ENCODE measurements at regions of chr6 and their contacts with region 1.

Region 1: DNA sequence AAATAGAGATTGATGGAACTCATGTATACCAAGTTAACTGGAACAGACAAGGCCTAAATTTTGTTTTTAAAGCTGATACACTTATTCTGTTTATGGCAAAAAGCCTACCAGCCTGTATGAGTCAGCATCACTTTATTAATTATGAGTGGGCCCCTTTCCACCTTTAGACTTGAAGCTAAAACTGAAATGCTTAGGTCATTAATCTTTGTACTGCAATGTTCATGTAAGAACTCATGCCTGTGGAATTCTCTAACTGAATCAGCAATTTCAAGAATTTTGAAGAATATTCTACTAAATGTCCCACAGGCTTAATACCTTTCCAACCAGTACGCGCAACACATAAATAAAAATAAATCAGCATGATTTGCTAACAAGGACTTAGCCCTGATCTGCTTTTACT is 140.2 kb upstream of the PHACTR1 start:
- DNase-seq: peak; percentile 34
- H3K4me3 Mint-ChIP-seq: no peak overlapping the region
- H3K27ac Mint-ChIP-seq: peak overlapping the region; percentile 16
- H3K4me1 Mint-ChIP-seq: peaks cover 56% of the 10 kb centered on the region
- H3K27me3 Mint-ChIP-seq: no peaks in the 10 kb centered on the region
- CTCF ChIP-seq: no peak

Region 2: GRCh38 chr6:12354499-12354898 is 221.9 kb before region 1 on chr6:
- CTCF ChIA-PET with region 1: no interaction called
- POLR2A ChIA-PET with region 1: interaction called, 21 read pairs
- intact Hi-C with region 1: no loop called
- DNase-seq: peak; percentile 90
- H3K4me3 Mint-ChIP-seq: peak overlapping the region; percentile 49
- H3K27ac Mint-ChIP-seq: peak overlapping the region; percentile 83
- H3K4me1 Mint-ChIP-seq: peaks cover 39% of the 10 kb centered on the region
- H3K27me3 Mint-ChIP-seq: no peaks in the 10 kb centered on the region
- CTCF ChIP-seq: no peak

Region 3: GRCh38 chr6:12472601-12473038 is 103.8 kb before region 1 on chr6:
- CTCF ChIA-PET with region 1: no interaction called
- POLR2A ChIA-PET with region 1: interaction called, 28 read pairs
- intact Hi-C with region 1: no loop called
- DNase-seq: peak; percentile 96
- H3K4me3 Mint-ChIP-seq: no peak overlapping the region
- H3K27ac Mint-ChIP-seq: peak overlapping the region; percentile 49
- H3K4me1 Mint-ChIP-seq: peaks cover 41% of the 10 kb centered on the region
- H3K27me3 Mint-ChIP-seq: no peaks in the 10 kb centered on the region
- CTCF ChIP-seq: no peak

Region 4: DNA sequence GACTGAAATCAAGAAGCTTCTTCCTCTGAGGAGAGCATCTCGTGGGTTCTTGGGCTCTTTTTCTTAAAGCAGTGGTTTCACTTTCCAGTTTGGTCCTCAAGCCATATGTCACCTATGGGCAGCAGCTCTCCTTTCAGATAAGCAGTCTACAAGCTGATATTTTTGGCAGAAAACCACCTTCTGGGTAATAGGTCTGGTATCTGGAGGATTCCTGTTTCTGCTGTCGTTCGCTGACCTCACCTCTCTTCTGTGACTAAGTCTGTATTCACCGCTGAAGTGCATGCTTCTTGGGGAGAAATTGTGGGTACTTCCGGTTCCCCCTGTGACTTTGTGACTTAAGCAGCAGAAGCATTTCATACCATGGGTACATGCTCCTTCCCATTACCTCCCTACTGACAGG is 92.7 kb before region 1 on chr6:
- CTCF ChIA-PET with region 1: no interaction called
- POLR2A ChIA-PET with region 1: interaction called, 19 read pairs
- intact Hi-C with region 1: no loop called
- DNase-seq: peak; percentile 76
- H3K4me3 Mint-ChIP-seq: peak overlapping the region; percentile 35
- H3K27ac Mint-ChIP-seq: peak overlapping the region; percentile 47
- H3K4me1 Mint-ChIP-seq: peaks cover 25% of the 10 kb centered on the region
- H3K27me3 Mint-ChIP-seq: no peaks in the 10 kb centered on the region
- CTCF ChIP-seq: no peak

Region 5: DNA sequence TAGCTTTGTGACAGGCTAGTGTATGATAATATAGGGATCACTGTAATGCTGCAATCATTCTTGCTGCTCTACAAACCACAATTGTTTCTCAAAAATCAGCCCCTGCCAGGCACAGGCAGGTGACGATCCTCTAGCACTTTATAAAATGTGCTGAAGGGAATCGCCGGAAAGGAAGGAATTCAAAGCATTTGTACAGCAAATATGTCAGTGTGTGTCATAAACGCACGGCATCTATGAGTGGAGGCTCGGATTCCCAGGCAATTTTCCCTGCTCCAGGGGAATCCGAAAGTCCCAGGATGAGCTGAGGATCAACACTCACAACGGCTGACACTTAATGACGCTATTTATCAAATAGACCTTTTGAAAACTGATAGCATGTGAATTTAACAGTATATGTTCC is 141.6 kb after region 1 on chr6:
- CTCF ChIA-PET with region 1: no interaction called
- POLR2A ChIA-PET with region 1: no interaction called
- intact Hi-C with region 1: no loop called
- DNase-seq: no peak
- H3K4me3 Mint-ChIP-seq: no peak overlapping the region
- H3K27ac Mint-ChIP-seq: no peak overlapping the region
- H3K4me1 Mint-ChIP-seq: no peaks in the 10 kb centered on the region
- H3K27me3 Mint-ChIP-seq: peaks cover 72% of the 10 kb centered on the region
- CTCF ChIP-seq: no peak